ENCODE measurements at regions of chr1 and their contacts with region 1.

Region 1: GRCh38 chr1:205812878-205813754 is at the start of gene SLC41A1:
- DNase-seq: peak; percentile 78
- ATAC-seq: peak; percentile 96
- H3K4me3 Mint-ChIP-seq: peak within 1 kb of the TSS; percentile 95
- H3K27ac Mint-ChIP-seq: peak within 1 kb of the TSS; percentile 83
- H3K4me1 Mint-ChIP-seq: peaks cover 52% of the 10 kb centered on the region
- H3K27me3 Mint-ChIP-seq: no peaks in the 10 kb centered on the region
- CTCF ChIP-seq: no peak
- total RNA-seq, gene SLC41A1: 31.2 and 32.4 TPM in 2 replicates

Region 2: GRCh38 chr1:205849619-205850355 is 36.7 kb after region 1 on chr1 and contains the start of gene PM20D1:
- CTCF ChIA-PET with region 1: no interaction called
- POLR2A ChIA-PET with region 1: interaction called, 6 read pairs
- intact Hi-C with region 1: loop called (anchors 1 kb)
- DNase-seq: peak; percentile 69
- ATAC-seq: peak; percentile 99
- H3K4me3 Mint-ChIP-seq: peak within 1 kb of the TSS; percentile 93
- H3K27ac Mint-ChIP-seq: peak within 1 kb of the TSS; percentile 91
- H3K4me1 Mint-ChIP-seq: peaks cover 14% of the 10 kb centered on the region
- H3K27me3 Mint-ChIP-seq: no peaks in the 10 kb centered on the region
- CTCF ChIP-seq: no peak
- total RNA-seq, gene PM20D1: 1.2 and 2.1 TPM in 2 replicates

Region 3: GRCh38 chr1:205919026-205919746 is 106.1 kb after region 1 on chr1:
- CTCF ChIA-PET with region 1: no interaction called
- POLR2A ChIA-PET with region 1: no interaction called
- intact Hi-C with region 1: loop called (anchors 5 kb)
- DNase-seq: peak; percentile 58
- ATAC-seq: peak; percentile 93
- H3K4me3 Mint-ChIP-seq: no peak overlapping the region
- H3K27ac Mint-ChIP-seq: no peak overlapping the region
- H3K4me1 Mint-ChIP-seq: no peaks in the 10 kb centered on the region
- H3K27me3 Mint-ChIP-seq: peaks cover 5% of the 10 kb centered on the region
- CTCF ChIP-seq: no peak

Measured in activated B cell treated with CpG ODN at 0.5 μM for 24 hours (primary cell).